Motor neuron (in vitro differentiated cells): ENCODE measurements at regions of chr1 and their contacts with region 1.

Region 1: DNA sequence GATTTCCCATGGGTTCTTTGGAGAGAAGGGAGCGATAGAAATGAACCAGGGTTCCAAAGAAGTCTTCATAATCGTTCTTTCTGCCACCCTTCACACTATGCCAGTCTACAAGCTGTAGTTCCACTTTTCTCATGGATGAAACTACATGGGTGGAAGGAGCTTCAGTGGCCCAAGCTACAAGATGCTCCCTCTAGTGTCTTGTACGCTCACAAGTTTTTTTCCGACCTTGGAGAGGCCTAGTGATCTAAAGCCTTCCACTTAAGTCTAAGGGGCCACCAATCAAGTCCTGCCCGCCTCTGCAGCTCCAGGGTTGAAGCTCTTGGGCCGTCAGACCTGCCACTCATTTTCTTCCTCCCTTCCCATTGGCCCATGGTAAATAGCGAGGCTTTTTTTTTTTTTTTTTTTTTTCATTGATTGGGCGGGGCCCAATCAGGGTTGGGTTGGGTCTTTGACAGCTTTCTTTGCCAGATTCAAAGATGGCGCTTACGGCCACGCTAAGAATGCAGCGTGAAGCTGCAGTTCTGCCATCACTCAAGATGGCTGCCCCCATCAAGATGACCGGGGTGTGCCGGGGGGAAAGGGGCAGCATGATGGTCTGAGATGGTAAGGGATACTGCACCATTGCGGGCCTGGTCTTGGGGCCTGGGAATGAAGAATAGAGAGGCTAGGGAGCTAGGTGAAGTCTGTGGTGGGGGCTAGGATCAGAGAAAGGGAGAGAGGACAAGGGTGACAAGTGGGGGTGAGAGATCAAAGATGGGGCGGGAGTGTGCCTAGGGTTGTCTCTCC is at the start of gene TOMM40L:
- ATAC-seq: peak; percentile 94 to 99 (median 98)
- H3K4me3 ChIP-seq: peak within 1 kb of the TSS; percentile 61 to 95 (median 68)
- H3K27ac ChIP-seq: peak within 1 kb of the TSS; percentile 50 to 58
- H3K4me1 ChIP-seq: peaks cover 10 to 15% of the 10 kb centered on the region in 2 donors
- total RNA-seq, gene TOMM40L: 5.1 to 24.3 (median 17.3) TPM

Region 2: GRCh38 chr1:160755911-160756848 is 469.5 kb before region 1 on chr1:
- in situ Hi-C with region 1: no loop called
- ATAC-seq: no peak
- H3K4me3 ChIP-seq: no peak overlapping the region
- H3K27ac ChIP-seq: no peak overlapping the region
- H3K4me1 ChIP-seq: peaks cover 0 to 3% of the 10 kb centered on the region in 2 donors

Region 3: GRCh38 chr1:160997323-160998038 is 228.2 kb before region 1 on chr1:
- in situ Hi-C with region 1: no loop called
- ATAC-seq: peak; percentile 45 to 91 (median 76)
- H3K4me3 ChIP-seq: no peak overlapping the region
- H3K27ac ChIP-seq: no peak overlapping the region
- H3K4me1 ChIP-seq: no peaks in the 10 kb centered on the region

Region 4: DNA sequence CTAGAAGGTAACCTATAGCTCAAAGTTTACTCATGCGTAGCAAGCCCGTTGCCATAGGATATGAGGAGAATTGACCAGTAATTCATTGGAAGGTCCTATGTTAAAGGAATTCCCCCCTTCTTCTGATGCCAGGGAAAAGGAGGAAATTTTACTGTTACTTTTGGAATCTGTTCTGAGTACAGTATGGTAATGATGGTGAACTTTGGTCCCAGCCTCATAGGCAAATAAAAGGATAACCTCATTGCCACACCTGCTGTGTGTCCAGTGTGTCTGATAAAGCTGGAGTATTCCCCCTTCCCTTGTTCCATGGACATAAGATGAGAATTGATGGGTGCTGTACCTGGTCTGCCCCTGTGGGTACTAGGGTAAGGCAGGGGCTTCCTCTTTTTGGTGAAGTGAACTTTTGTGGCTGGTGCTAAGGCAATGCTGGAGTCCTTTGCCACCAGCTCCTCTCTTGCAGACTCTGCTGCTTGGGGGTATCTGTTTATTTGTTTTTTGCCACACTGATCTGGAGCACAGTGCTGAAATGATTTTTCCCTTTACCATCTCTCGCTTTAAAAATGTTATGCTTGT is 61.8 kb after region 1 on chr1:
- in situ Hi-C with region 1: loop called in 1 of 9 experiments (anchors 10 kb)
- ATAC-seq: no peak
- H3K4me3 ChIP-seq: no peak overlapping the region
- H3K27ac ChIP-seq: no peak overlapping the region
- H3K4me1 ChIP-seq: no peaks in the 10 kb centered on the region

Region 5: GRCh38 chr1:161374373-161374772 is 148.6 kb after region 1 on chr1:
- in situ Hi-C with region 1: loop called in 6 of 9 experiments (anchors 10 to 25 kb)
- ATAC-seq: peak in 2 of 8 experiments; percentile 19 to 35
- H3K4me3 ChIP-seq: no peak overlapping the region
- H3K27ac ChIP-seq: no peak overlapping the region
- H3K4me1 ChIP-seq: no peaks in the 10 kb centered on the region

Region 6: DNA sequence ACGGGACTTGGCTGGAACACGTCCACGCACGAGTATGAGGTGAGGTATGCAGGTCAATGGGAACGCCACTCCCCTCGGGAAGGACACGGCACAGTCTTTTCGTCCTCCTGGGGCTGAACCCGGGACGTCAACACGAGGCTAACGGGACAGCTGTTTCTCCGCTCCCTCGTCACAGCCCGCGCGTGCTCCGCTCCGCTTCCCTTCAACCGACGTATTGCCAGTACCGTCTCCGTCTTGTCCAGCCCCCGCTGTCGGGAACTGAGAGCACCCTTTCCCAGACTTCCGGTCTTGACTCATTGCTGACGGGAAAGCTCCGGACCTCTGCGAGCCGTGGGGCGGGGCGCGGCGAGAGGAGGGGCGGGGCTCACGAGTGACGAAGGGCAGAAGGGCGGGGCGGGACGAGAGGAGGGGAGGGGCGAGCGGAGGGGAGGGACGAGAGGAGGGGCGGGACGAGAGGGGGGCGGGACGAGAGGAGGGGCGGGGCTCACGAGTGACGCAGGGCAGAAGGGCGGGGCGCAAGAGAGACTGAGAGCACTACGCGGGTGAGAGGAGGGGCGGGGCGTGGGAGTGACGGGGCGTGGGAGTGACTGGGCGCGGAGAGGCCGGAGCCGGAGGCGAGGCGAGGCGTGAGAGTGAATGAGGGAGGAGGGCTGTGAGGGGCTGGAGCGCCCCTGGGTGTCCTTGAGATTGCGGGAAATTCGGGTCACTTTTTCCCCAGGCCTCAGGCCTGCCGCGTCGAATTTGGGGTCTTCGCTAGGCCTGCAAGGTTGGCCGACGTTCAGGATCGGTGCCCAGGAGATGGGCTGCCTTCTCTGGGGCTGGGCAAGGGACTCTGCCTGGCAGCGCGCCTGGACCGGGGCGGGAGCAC is 164.2 kb after region 1 on chr1:
- in situ Hi-C with region 1: loop called in 6 of 9 experiments (anchors 10 to 25 kb)
- ATAC-seq: peak; percentile 89 to 95 (median 93)
- H3K4me3 ChIP-seq: peak overlapping the region; percentile 52 to 90 (median 69)
- H3K27ac ChIP-seq: peak overlapping the region; percentile 73 to 85
- H3K4me1 ChIP-seq: peaks cover 3 to 6% of the 10 kb centered on the region in 2 donors

Region 7: DNA sequence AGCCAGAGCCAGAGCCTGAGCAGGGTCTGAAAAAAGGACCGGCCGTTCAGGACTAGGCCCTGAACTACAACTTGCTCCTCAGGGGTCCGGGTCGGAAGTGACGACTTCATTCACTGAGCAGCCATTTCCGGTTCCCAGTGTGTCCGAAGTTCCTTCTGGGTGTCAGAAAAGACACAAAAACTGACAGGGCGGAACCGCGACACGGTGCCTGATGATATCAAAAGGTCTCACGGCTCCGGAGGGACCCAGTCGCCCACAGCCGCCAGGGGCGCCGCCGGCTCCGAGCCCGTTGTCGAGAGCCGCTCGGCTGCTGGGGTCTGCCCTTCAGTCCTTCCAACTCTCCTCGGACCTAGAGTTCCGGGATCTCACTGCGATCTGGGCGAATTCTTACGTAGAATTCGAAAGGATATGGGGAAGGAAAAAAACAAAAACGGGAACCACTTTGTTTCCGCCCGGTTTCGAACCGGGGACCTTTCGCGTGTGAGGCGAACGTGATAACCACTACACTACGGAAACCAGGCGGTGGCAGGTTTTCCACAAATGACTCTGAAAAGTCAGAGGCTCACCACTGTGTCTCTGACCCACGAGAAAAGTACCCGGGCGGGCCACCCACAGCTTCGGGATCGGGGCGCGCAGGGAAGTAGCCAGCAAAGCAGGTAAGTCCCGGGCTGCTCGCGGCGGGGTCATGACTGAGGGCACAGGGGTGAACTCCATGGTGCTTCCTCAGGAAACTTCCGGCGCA is 173.7 kb after region 1 on chr1:
- in situ Hi-C with region 1: loop called in 5 of 9 experiments (anchors 25 kb)
- ATAC-seq: peak; percentile 78 to 88 (median 86)
- H3K4me3 ChIP-seq: peak overlapping the region; percentile 73 to 96 (median 76)
- H3K27ac ChIP-seq: peak overlapping the region; percentile 89 to 97
- H3K4me1 ChIP-seq: peaks cover 5% of the 10 kb centered on the region in 2 donors

Region 8: DNA sequence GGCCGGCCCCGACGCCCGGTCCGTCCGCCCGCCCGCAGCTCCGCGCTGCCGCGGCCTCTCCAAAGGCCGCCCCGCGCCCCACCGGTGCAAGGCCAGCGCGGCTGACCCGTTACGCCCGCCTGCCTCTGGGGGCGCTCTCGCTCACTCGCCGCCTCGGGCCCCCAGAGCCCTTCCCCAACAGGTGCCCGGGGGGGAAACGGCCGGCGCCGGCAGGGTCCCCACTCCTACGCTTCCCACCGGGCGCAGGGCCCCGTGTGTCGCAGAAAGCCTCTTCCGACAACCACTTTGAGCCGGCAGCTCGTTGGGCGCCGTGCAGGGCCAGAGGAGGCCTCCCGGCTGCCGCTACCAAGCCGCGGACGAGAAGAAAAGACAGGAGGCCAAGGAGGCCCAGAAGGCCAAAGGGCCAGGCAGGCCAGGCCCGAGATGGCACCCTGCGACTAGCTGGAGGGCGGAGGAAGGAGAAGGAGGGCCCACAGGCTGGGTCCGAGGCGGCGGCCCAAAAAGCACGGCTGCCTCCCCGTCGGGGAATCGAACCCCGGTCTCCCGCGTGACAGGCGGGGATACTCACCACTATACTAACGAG is 214.7 kb after region 1 on chr1:
- in situ Hi-C with region 1: no loop called
- ATAC-seq: peak; percentile 67 to 84 (median 78)
- H3K4me3 ChIP-seq: peak overlapping the region; percentile 44 to 98 (median 73)
- H3K27ac ChIP-seq: peak overlapping the region in 1 of 2 donors; percentile 56
- H3K4me1 ChIP-seq: no peaks in the 10 kb centered on the region

Region 9: DNA sequence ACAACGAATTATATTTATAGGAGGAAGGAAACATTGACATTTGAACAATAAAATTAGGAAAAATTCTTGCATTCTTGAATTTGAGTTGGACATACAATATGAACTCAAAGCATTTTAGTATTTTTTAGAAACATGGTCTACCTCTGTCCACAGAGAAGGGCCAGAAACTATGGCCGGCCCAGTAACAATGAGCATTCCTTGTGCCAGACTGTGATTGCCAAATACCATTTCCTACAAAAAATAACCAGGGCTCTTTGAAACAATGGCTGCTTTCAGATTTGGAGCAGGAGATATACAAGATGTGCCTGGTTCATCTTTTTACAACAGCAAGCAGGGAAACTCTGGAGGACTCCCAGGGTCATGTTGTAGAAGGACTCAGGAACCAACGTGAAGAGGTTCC is 882.2 kb after region 1 on chr1:
- in situ Hi-C with region 1: no loop called
- ATAC-seq: no peak
- H3K4me3 ChIP-seq: no peak overlapping the region
- H3K27ac ChIP-seq: no peak overlapping the region
- H3K4me1 ChIP-seq: peaks cover 7 to 11% of the 10 kb centered on the region in 2 donors